Aorta (tissue), 5 donors: ENCODE measurements at regions of chr19 and their contacts with region 1.

Region 1: GRCh38 chr19:29873024-29873800 is 61.4 kb downstream of the CCNE1 start:
- DNase-seq: peak; percentile 58 to 87
- ATAC-seq: peak; percentile 78
- H3K4me3 ChIP-seq: no peak overlapping the region
- H3K27ac ChIP-seq: no peak overlapping the region
- H3K4me1 ChIP-seq: no peaks in the 10 kb centered on the region
- H3K27me3 ChIP-seq: no peaks in the 10 kb centered on the region

Region 2: GRCh38 chr19:29731331-29731850 is 141.8 kb before region 1 on chr19:
- intact Hi-C with region 1: loop called (anchors 2 to 5 kb)
- DNase-seq: peak in 1 of 2 donors; percentile 54
- ATAC-seq: no peak
- H3K4me3 ChIP-seq: no peak overlapping the region
- H3K27ac ChIP-seq: no peak overlapping the region
- H3K4me1 ChIP-seq: no peaks in the 10 kb centered on the region
- H3K27me3 ChIP-seq: no peaks in the 10 kb centered on the region

Region 3: GRCh38 chr19:29760752-29761502 is 112.3 kb before region 1 on chr19:
- intact Hi-C with region 1: loop called in 1 of 2 experiments (anchors 1 kb)
- DNase-seq: no peak
- ATAC-seq: no peak
- H3K4me3 ChIP-seq: no peak overlapping the region
- H3K27ac ChIP-seq: no peak overlapping the region
- H3K4me1 ChIP-seq: no peaks in the 10 kb centered on the region
- H3K27me3 ChIP-seq: no peaks in the 10 kb centered on the region

Region 4: DNA sequence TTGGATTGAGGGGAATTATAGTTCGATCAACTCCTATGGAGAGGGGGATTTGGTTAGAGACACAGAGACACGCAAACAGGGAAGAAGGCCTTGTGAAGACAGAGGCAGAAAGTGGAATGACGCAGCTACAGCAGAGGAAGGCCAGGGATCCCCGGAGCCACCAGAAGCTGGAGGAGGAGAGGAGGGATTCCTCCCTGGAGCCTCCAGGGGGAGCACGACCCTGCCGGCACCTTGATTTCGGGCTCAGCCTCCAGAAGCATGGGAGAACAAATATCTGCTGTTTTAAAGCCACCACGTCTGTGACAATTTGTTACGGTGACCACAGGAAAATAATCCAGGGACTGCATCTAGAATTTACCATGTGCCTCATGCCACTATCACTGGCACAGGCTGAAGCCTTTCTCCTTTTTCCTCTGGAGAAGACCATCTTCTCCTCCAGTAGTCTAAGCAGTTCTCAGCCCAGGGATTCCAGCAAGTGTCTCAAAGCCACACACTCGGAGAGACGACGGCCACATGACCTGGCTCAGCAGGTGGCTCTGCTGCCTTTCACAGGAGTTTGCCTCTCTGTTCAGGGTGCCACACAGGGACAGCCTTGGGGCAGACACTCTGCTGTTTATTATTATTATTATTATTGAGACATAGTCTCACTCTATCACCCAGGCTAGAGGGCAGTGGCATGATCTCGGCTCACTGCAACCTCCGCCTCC is 101.4 kb before region 1 on chr19:
- intact Hi-C with region 1: loop called (anchors 5 kb)
- DNase-seq: no peak
- ATAC-seq: no peak
- H3K4me3 ChIP-seq: no peak overlapping the region
- H3K27ac ChIP-seq: no peak overlapping the region
- H3K4me1 ChIP-seq: no peaks in the 10 kb centered on the region
- H3K27me3 ChIP-seq: no peaks in the 10 kb centered on the region

Region 5: GRCh38 chr19:29831041-29831548 is 42.1 kb before region 1 on chr19:
- intact Hi-C with region 1: no loop called
- DNase-seq: peak in 1 of 2 donors; percentile 31
- ATAC-seq: no peak
- H3K4me3 ChIP-seq: no peak overlapping the region
- H3K27ac ChIP-seq: no peak overlapping the region
- H3K4me1 ChIP-seq: no peaks in the 10 kb centered on the region
- H3K27me3 ChIP-seq: peaks cover 0 to 1% of the 10 kb centered on the region in 2 donors